GM13977 (cell line): ENCODE measurements at regions of chr14 and their contacts with region 1.

Region 1: DNA sequence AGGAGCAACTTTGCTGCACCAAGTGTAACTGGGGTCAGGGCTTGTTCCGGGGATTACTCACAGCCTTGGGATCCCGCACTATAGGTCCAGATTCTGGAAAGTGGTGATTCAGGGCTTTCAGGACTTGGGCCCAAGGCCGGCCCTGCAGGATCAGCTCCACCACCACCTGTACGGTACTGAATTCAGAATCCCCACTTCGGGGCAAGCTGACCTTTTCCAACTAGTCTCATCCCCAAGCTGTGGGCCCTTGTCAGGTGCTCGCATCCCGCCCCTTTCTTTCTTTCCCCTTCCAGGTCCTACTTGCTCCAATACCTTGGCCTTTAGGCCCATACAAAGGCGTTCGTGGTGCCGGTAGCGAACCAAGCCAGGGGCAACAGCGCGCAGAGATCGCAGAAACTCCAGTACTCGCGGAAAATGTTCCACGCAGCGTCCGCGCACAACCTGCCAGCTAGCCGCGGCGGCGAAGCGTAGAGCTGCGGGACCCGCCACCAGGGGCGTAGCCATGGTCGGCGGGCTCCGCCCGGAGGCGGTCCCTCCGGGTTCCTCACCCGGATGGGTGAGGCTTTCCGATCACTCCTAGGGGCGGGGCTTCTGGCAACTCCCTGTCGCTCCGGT is 487 bp downstream of the TINF2 start:
- DNase-seq: peak; percentile 93
- CTCF ChIP-seq: peak; percentile 9

Region 2: GRCh38 chr14:24299255-24300195 is 57.6 kb after region 1 on chr14 and contains the starts of genes DHRS1 and NOP9:
- in situ Hi-C with region 1: loop called (anchors 5 kb)
- DNase-seq: peak; percentile 97
- CTCF ChIP-seq: no peak